ENCODE measurements at regions of chr17 and their contacts with region 1.

Region 1: GRCh38 chr17:82236142-82236981 is 7.5 kb downstream of the SLC16A3 start:
- DNase-seq: peak in 1 of 2 donors; percentile 67
- ATAC-seq: peak in 5 of 8 donors; percentile 0 to 10 (median 4)
- H3K4me3 ChIP-seq: no peak overlapping the region
- H3K27ac ChIP-seq: peak overlapping the region in 2 of 10 donors; percentile 45 to 51
- H3K4me1 ChIP-seq: peaks cover 53 to 98% (median 63%) of the 10 kb centered on the region in 9 donors
- H3K27me3 ChIP-seq: no peaks in the 10 kb centered on the region
- CTCF ChIP-seq: peak; percentile 76 to 92 (median 87)

Region 2: GRCh38 chr17:82273327-82274133 is 37.2 kb after region 1 on chr17 and contains the start of gene CSNK1D:
- intact Hi-C with region 1: loop called in 2 of 10 experiments (anchors 5 kb)
- DNase-seq: peak; percentile 92 to 93
- ATAC-seq: peak; percentile 93 to 96 (median 94)
- H3K4me3 ChIP-seq: peak within 1 kb of the TSS; percentile 61 to 96 (median 88)
- H3K27ac ChIP-seq: peak within 1 kb of the TSS; percentile 86 to 100 (median 98)
- H3K4me1 ChIP-seq: peaks cover 14 to 52% (median 47%) of the 10 kb centered on the region in 9 donors
- H3K27me3 ChIP-seq: no peaks in the 10 kb centered on the region
- CTCF ChIP-seq: no peak
- total RNA-seq, gene CSNK1D: 56.8 to 72.7 (median 67.8) TPM

Region 3: GRCh38 chr17:82292251-82293154 is 56.1 kb after region 1 on chr17:
- intact Hi-C with region 1: loop called in 4 of 10 experiments (anchors 5 to 10 kb)
- DNase-seq: peak; percentile 94 to 97
- ATAC-seq: peak; percentile 92 to 96 (median 95)
- H3K4me3 ChIP-seq: peak overlapping the region; percentile 53 to 93 (median 76)
- H3K27ac ChIP-seq: peak overlapping the region; percentile 86 to 99 (median 96)
- H3K4me1 ChIP-seq: peaks cover 14 to 63% (median 45%) of the 10 kb centered on the region in 9 donors
- H3K27me3 ChIP-seq: no peaks in the 10 kb centered on the region
- CTCF ChIP-seq: no peak

Measured in heart right ventricle (tissue), 16 donors.